Activated B cell treated with CpG ODN at 0.5 μM for 24 hours (primary cell): ENCODE measurements at regions of chr1 and their contacts with region 1.

Region 1: GRCh38 chr1:44674113-44675000 is at the starts of genes ARMH1 and TMEM53:
- DNase-seq: peak; percentile 98
- ATAC-seq: peak; percentile 90
- H3K4me3 Mint-ChIP-seq: peak within 1 kb of the TSS; percentile 87
- H3K27ac Mint-ChIP-seq: peak within 1 kb of the TSS; percentile 93
- H3K4me1 Mint-ChIP-seq: peaks cover 32% of the 10 kb centered on the region
- H3K27me3 Mint-ChIP-seq: no peaks in the 10 kb centered on the region
- CTCF ChIP-seq: no peak
- total RNA-seq, gene ARMH1: 18.1 and 19.9 TPM in 2 replicates
- total RNA-seq, gene TMEM53: 4.6 and 4.8 TPM in 2 replicates

Region 2: GRCh38 chr1:44029906-44030604 is 644.3 kb before region 1 on chr1:
- CTCF ChIA-PET with region 1: no interaction called
- POLR2A ChIA-PET with region 1: interaction called, 4 read pairs
- intact Hi-C with region 1: loop called (anchors 1 kb)
- DNase-seq: peak; percentile 93
- ATAC-seq: peak; percentile 76
- H3K4me3 Mint-ChIP-seq: peak overlapping the region; percentile 95
- H3K27ac Mint-ChIP-seq: peak overlapping the region; percentile 97
- H3K4me1 Mint-ChIP-seq: peaks cover 32% of the 10 kb centered on the region
- H3K27me3 Mint-ChIP-seq: no peaks in the 10 kb centered on the region
- CTCF ChIP-seq: no peak

Region 3: GRCh38 chr1:44652445-44653106 is 21.8 kb before region 1 on chr1:
- CTCF ChIA-PET with region 1: interaction called, 11 read pairs
- POLR2A ChIA-PET with region 1: interaction called, 7 read pairs
- intact Hi-C with region 1: no loop called
- DNase-seq: peak; percentile 70
- ATAC-seq: peak; percentile 98
- H3K4me3 Mint-ChIP-seq: no peak overlapping the region
- H3K27ac Mint-ChIP-seq: peak overlapping the region; percentile 73
- H3K4me1 Mint-ChIP-seq: no peaks in the 10 kb centered on the region
- H3K27me3 Mint-ChIP-seq: no peaks in the 10 kb centered on the region
- CTCF ChIP-seq: peak; percentile 28

Region 4: DNA sequence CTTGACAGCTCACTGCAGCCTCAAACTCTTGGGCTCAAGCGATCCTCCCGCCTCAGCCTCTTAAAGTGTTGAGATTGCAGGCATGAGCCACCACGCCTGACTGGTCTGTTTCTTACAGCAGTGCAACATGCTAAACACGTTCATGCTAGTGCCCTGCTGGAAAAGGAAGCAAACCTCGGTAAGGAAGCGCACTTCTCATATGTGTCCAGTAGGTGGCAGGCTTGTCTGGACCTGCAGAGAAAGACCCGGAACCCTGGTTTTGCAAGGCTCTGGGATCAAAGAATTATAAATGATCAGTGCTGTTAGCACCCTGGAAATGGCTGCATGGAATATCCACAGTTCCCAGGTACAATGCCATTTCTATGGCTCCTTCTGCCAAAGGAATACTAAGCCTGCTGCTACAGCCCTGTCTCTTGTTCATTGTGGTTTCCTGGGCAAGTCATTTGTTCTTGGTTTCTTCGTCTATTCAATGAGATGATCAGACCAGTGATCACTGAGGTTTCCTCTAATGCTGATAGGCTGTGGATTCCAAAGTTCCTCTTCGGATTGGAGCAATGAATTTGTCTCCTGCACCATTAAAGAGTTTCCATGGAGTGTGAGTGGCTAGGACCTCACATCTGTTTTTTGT is 40.7 kb after region 1 on chr1:
- CTCF ChIA-PET with region 1: interaction called, 4 read pairs
- POLR2A ChIA-PET with region 1: interaction called, 26 read pairs
- intact Hi-C with region 1: no loop called
- DNase-seq: no peak
- ATAC-seq: peak; percentile 78
- H3K4me3 Mint-ChIP-seq: peak overlapping the region; percentile 58
- H3K27ac Mint-ChIP-seq: peak overlapping the region; percentile 89
- H3K4me1 Mint-ChIP-seq: peaks cover 75% of the 10 kb centered on the region
- H3K27me3 Mint-ChIP-seq: no peaks in the 10 kb centered on the region
- CTCF ChIP-seq: peak; percentile 72

Region 5: DNA sequence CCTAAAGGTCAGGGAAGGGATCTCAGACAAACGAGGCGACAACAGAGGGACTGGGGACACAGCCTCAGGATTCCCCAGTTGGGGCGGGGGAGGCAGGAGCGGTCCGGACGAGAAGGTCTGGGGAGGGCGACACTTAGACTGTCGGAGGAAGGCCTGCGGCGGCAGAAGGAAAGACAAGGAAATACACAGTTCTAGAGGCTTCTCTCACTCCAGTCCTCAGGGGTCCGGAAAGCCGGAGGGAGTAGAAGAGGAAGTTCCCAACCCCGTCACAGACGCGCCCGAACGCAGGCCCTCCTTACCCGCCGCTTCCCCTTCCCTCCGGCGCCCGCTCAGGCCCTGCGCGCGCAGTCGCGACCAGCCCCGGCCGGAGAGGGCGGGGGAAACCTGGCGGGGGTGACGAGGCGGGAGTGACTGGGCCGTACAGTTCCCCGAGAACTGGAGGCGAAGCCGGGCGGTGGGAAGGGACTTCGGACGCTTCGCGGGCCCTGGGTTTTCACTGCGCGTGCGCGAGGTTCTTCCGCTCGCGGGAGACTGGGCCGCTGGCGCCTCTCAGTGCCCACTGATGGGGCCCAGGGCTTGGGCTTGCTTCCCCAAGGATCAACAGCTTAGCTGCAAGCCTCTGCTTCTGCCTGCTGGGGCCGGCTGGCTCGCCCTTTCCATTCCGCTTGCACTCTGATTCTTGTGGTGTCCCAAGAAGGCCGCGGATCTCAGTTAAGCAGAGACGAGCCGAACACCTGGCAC is 1076.1 kb after region 1 on chr1 and contains the start of gene IPP:
- CTCF ChIA-PET with region 1: no interaction called
- POLR2A ChIA-PET with region 1: no interaction called
- intact Hi-C with region 1: loop called (anchors 5 kb)
- DNase-seq: peak; percentile 96
- ATAC-seq: peak; percentile 95
- H3K4me3 Mint-ChIP-seq: peak within 1 kb of the TSS; percentile 93
- H3K27ac Mint-ChIP-seq: peak within 1 kb of the TSS; percentile 99
- H3K4me1 Mint-ChIP-seq: peaks cover 17% of the 10 kb centered on the region
- H3K27me3 Mint-ChIP-seq: no peaks in the 10 kb centered on the region
- CTCF ChIP-seq: no peak
- total RNA-seq, gene IPP: 10.2 and 11.4 TPM in 2 replicates

Region 6: GRCh38 chr1:46394108-46394871 is 1719.9 kb after region 1 on chr1 and contains the start of gene FAAH:
- CTCF ChIA-PET with region 1: no interaction called
- POLR2A ChIA-PET with region 1: no interaction called
- intact Hi-C with region 1: no loop called
- DNase-seq: no peak
- ATAC-seq: peak; percentile 52
- H3K4me3 Mint-ChIP-seq: peak within 1 kb of the TSS; percentile 71
- H3K27ac Mint-ChIP-seq: no peak within 1 kb of the TSS
- H3K4me1 Mint-ChIP-seq: peaks cover 8% of the 10 kb centered on the region
- H3K27me3 Mint-ChIP-seq: peaks cover 35% of the 10 kb centered on the region
- CTCF ChIP-seq: no peak
- total RNA-seq, gene FAAH: 5.1 and 6.4 TPM in 2 replicates